SK-N-SH (cell line): ENCODE measurements at regions of chr4 and their contacts with region 1.

Region 1: DNA sequence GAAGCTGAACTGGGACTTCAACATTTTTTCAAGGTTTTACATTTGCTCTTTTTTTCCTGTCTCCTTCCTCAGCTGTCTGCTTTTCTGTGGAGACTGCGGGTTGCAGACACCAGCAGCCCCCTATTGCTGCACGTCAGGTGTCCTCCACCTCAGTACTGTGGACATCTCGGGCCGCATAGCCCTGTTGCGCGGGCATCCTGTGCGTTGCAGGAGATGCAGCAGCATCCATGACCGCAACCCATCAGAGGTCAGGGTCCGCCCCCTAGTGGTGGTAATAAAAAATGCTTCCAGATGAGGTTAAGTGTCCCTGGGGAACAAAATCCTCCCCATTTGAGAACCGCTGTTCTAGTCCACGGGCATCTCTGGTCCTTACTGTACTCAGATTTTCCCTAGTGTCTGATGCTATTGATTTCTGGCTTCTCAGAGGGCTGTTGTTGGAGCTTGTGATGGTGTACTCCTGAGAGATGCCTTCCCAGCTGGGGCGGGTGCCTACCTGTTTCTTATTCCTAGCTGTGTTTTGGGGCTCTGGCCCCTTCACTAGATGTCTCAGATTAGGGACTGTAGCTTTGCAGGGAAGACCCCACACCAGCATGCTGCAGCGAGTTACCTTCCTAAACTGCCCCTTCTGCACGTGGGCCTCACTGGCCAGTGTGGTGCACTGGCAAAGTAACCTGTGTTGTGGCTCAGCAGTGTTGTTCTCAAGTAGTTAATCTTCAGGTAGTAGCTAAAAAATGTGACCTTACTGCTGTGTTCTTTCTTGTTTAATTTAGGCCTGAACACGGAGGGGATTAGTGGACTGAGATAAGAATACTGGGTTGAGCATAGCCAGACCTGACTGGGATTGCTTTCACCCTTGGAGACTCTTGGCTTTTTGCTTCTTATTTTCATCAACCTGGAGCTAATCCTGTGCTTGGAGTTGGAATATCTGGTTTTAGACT is 28.2 kb downstream of the NSD2 start:
- DNase-seq: peak; percentile 86
- H3K4me3 ChIP-seq: peak overlapping the region in 1 of 2 experiments; percentile 9; a peak in 1 of 4 replicates
- H3K27ac ChIP-seq: peak overlapping the region in 1 of 2 experiments; percentile 48; a peak in 2 of 4 replicates
- H3K4me1 ChIP-seq: peaks cover 0 to 7% of the 10 kb centered on the region in 2 experiments; a peak in 1 of 4 replicates
- H3K27me3 ChIP-seq: no peaks in the 10 kb centered on the region
- CTCF ChIP-seq: peak; percentile 88
- EP300 ChIP-seq: no peak
- RAD21 ChIP-seq: peak; percentile 90

Region 2: GRCh38 chr4:1809754-1810511 is 89.5 kb before region 1 on chr4:
- CTCF ChIA-PET with region 1: interaction called, 38 read pairs
- POLR2A ChIA-PET with region 1: no interaction called
- DNase-seq: peak; percentile 96
- H3K4me3 ChIP-seq: peak overlapping the region in 1 of 2 experiments; percentile 42; a peak in 1 of 4 replicates
- H3K27ac ChIP-seq: no peak overlapping the region
- H3K4me1 ChIP-seq: peaks cover 0 to 3% of the 10 kb centered on the region in 2 experiments; a peak in 1 of 4 replicates
- H3K27me3 ChIP-seq: no peaks in the 10 kb centered on the region
- CTCF ChIP-seq: peak; percentile 93
- EP300 ChIP-seq: no peak
- RAD21 ChIP-seq: peak; percentile 92

Region 3: DNA sequence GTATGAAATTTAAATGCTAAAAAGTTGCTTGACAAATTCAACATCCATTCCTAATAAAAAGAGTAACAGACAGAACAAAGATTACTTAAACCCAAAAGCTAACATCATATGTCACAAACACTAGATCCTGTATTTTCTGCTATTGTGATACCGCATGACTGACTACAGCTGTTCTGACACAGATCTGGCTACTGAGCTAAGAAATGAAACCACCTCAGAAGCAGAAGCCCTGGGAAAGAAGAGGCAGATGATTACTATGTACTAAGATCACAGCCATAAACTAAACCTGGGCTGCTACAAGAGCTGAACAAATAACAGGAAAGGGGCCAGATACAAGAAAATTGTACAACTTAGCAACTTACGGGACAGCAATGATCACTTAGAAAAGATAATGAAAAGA is 52.8 kb before region 1 on chr4:
- CTCF ChIA-PET with region 1: interaction called, 13 read pairs
- POLR2A ChIA-PET with region 1: no interaction called
- DNase-seq: no peak
- H3K4me3 ChIP-seq: no peak overlapping the region
- H3K27ac ChIP-seq: no peak overlapping the region
- H3K4me1 ChIP-seq: no peaks in the 10 kb centered on the region; a peak in 1 of 4 replicates
- H3K27me3 ChIP-seq: no peaks in the 10 kb centered on the region
- CTCF ChIP-seq: no peak
- EP300 ChIP-seq: no peak
- RAD21 ChIP-seq: no peak

Region 4: DNA sequence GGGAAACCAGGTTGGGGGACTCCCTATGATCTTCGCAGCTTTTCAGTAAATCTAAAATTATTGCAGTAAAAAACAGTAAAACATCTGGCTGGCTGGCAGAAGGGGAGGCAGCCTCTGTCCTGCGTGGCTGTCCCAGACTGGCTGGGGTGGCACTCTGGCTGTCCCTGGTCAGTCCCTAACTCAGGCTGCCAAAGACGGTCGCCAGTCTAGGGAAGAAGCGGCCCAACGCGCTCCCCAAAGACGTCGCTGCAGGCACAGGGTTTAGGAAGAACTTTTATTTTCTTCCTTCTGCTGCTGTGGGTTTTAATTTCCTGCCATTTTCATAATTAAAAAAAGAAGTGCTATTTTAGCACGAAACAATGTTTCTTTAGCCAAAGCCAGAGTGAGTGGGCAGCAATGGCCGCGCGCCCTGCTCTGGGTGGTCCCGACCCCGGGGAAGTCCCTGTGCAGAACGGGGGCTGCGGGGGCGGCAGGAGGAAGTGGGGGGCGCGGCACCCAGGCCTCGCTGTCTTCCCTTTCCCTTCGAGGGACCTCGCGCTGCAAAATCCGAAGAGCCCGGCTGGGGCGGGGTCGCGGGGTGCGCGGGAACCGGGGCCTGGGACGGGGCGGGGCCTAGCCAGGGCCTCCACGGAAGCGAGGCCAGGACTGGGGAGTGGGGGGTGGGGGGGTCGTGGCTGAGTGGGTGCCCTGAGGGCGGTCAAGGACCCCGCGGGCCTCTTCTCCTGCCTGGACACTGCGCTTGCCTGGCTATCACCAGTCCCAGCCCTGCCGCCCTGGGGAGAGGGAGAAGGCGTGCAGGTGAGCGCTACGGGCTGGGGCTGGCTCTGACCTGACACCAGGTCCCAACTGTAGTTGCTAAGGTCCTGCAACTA is 37.1 kb before region 1 on chr4:
- CTCF ChIA-PET with region 1: interaction called, 25 read pairs
- POLR2A ChIA-PET with region 1: no interaction called
- DNase-seq: no peak
- H3K4me3 ChIP-seq: no peak overlapping the region
- H3K27ac ChIP-seq: no peak overlapping the region
- H3K4me1 ChIP-seq: peaks cover 0 to 21% of the 10 kb centered on the region in 2 experiments; a peak in 1 of 4 replicates
- H3K27me3 ChIP-seq: no peaks in the 10 kb centered on the region
- CTCF ChIP-seq: no peak
- EP300 ChIP-seq: no peak
- RAD21 ChIP-seq: no peak

Region 5: DNA sequence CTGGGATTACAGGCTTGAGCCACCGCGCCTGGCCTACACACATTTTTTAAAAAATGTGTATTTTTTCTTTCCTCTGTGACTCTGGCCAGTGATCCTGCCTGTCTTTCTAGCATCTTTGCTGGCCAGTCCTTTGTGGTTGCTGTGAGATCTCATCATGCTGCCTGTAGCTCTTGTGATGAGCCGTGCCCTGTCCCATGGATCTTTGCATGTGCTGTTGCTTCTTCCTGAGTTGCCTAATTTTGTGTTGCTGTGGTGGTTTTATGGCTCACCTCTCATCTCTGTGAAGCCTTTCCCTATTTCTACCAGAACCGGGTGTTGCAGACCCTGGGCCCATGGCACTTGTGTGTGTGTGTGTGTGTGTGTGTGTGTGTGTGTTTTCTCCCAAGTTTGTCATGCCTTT is 19.9 kb before region 1 on chr4:
- CTCF ChIA-PET with region 1: interaction called, 104 read pairs
- POLR2A ChIA-PET with region 1: no interaction called
- DNase-seq: no peak
- H3K4me3 ChIP-seq: no peak overlapping the region
- H3K27ac ChIP-seq: 0 out of 4 replicates have a peak overlapping the region, but pooled peaks of 1 of the 2 experiments have one; percentile 46
- H3K4me1 ChIP-seq: peaks cover 0 to 3% of the 10 kb centered on the region in 2 experiments; a peak in 1 of 4 replicates
- H3K27me3 ChIP-seq: no peaks in the 10 kb centered on the region
- CTCF ChIP-seq: no peak
- EP300 ChIP-seq: no peak
- RAD21 ChIP-seq: no peak

Region 6: GRCh38 chr4:1967512-1968149 is 68.2 kb after region 1 on chr4:
- CTCF ChIA-PET with region 1: no interaction called
- POLR2A ChIA-PET with region 1: no interaction called
- DNase-seq: peak; percentile 59
- H3K4me3 ChIP-seq: no peak overlapping the region
- H3K27ac ChIP-seq: peak overlapping the region in 1 of 2 experiments; percentile 11; a peak in 2 of 4 replicates
- H3K4me1 ChIP-seq: peaks cover 0 to 11% of the 10 kb centered on the region in 2 experiments; a peak in 1 of 4 replicates
- H3K27me3 ChIP-seq: no peaks in the 10 kb centered on the region
- CTCF ChIP-seq: no peak
- EP300 ChIP-seq: peak in 1 of 2 experiments; percentile 73; a peak in 2 of 4 replicates
- RAD21 ChIP-seq: no peak